Dorsolateral prefrontal cortex (tissue), 120 donors: ENCODE measurements at regions of chr10 and their contacts with region 1.

Region 1: GRCh38 chr10:22534849-22535604 is 179.4 kb downstream of the PIP4K2A start:
- DNase-seq: no peak
- H3K4me3 ChIP-seq: peak overlapping the region in 1 of 59 donors; percentile 5
- H3K27ac ChIP-seq: peak overlapping the region in 57 of 59 donors; percentile 0 to 92 (median 70)
- H3K27me3 ChIP-seq: no peaks in the 10 kb centered on the region
- CTCF ChIP-seq: no peak

Region 2: GRCh38 chr10:22054961-22055360 is 480.1 kb before region 1 on chr10:
- intact Hi-C with region 1: no loop called
- DNase-seq: no peak
- H3K4me3 ChIP-seq: no peak overlapping the region
- H3K27ac ChIP-seq: no peak overlapping the region
- H3K27me3 ChIP-seq: no peaks in the 10 kb centered on the region
- CTCF ChIP-seq: no peak

Region 3: GRCh38 chr10:22481687-22482541 is 53.1 kb before region 1 on chr10:
- intact Hi-C with region 1: loop called (anchors 2 to 10 kb)
- DNase-seq: no peak
- H3K4me3 ChIP-seq: no peak overlapping the region
- H3K27ac ChIP-seq: peak overlapping the region in 39 of 59 donors; percentile 0 to 94 (median 43)
- H3K27me3 ChIP-seq: peaks cover 0 to 9% (median 0%) of the 10 kb centered on the region in 45 donors
- CTCF ChIP-seq: no peak

Region 4: DNA sequence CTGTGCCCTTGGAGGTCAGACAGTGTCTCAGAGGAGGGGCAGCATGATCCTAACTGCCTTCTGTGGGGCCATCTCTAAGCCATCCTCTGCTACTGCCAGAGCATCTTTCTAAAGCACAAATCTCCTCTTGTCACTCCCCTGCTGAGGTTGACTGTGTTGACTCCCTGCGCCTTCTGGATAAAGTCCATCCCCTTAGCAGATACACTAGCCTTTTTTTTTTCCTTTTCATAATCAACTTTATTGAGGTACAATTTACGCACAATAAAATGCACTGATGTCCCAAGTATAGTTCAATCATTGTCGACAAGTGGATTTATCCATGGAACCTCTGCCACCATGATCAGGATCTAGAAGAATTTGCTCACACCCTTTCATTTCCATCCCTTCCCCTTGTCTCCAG is 39.6 kb before region 1 on chr10:
- intact Hi-C with region 1: loop called in 1 of 2 experiments (anchors 5 kb)
- DNase-seq: no peak
- H3K4me3 ChIP-seq: no peak overlapping the region
- H3K27ac ChIP-seq: no peak overlapping the region
- H3K27me3 ChIP-seq: peaks cover 0 to 7% (median 0%) of the 10 kb centered on the region in 45 donors
- CTCF ChIP-seq: no peak

Region 5: DNA sequence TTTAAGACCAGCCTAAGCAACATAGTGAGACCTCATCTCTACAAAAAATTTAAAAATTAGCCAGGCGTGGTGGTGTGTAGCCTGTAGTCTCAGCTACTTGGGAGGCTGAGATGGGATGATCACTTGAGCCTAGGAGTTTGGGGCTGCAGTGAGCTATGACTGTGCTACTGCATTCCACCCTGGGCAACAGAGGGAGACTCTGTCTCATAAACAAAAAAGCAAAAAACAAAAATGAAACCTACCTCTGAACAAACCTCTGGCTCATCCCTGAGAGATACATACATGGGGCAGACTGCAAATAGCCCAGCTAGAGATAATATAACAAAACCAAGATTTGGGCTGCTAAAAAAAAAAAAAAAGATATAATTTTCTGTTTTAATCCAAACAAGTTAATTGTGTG is 790.1 kb after region 1 on chr10:
- intact Hi-C with region 1: no loop called
- DNase-seq: no peak
- H3K4me3 ChIP-seq: no peak overlapping the region
- H3K27ac ChIP-seq: no peak overlapping the region
- H3K27me3 ChIP-seq: no peaks in the 10 kb centered on the region
- CTCF ChIP-seq: no peak